ENCODE measurements at regions of chr1 and their contacts with region 1.

Region 1: DNA sequence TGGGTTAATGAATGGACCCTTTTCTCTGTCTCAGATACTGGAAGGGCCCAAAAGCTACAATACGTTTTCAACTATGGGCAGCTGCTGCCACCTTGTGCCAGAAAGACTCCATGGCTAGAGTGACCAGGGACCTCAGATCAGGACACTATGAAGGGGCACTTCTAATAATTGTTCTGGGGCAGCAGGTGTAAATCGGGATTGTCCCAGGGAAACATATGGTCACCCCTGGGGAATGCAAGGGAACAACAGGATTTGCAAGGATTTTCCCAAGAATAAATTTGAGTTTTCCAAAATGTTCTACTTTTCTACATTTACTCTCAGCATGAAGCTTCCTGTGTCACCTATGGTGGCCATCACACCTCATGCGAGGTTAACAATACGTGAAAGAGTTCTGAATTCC is 12.0 kb upstream of the FCAMR start:
- DNase-seq: peak in 1 of 2 experiments; percentile 65
- H3K4me3 ChIP-seq: no peak overlapping the region
- H3K27ac ChIP-seq: no peak overlapping the region
- H3K4me1 ChIP-seq: peaks cover 4 to 15% (median 8%) of the 10 kb centered on the region in 4 experiments
- H3K27me3 ChIP-seq: no peaks in the 10 kb centered on the region; a peak in 1 of 7 replicates
- CTCF ChIP-seq: peak; percentile 49 to 86 (median 76)
- EP300 ChIP-seq: no peak
- POLR2A ChIP-seq: no peak
- RAD21 ChIP-seq: peak; percentile 88 to 92

Region 2: GRCh38 chr1:206808615-206809014 is 173.6 kb before region 1 on chr1:
- CTCF ChIA-PET with region 1: interaction called, 30 read pairs
- POLR2A ChIA-PET with region 1: no interaction called
- DNase-seq: no peak
- H3K4me3 ChIP-seq: no peak overlapping the region
- H3K27ac ChIP-seq: no peak overlapping the region
- H3K4me1 ChIP-seq: no peaks in the 10 kb centered on the region
- H3K27me3 ChIP-seq: no peaks in the 10 kb centered on the region
- CTCF ChIP-seq: peak; percentile 6 to 53 (median 44)
- EP300 ChIP-seq: no peak
- POLR2A ChIP-seq: no peak
- RAD21 ChIP-seq: peak; percentile 62 to 73

Region 3: DNA sequence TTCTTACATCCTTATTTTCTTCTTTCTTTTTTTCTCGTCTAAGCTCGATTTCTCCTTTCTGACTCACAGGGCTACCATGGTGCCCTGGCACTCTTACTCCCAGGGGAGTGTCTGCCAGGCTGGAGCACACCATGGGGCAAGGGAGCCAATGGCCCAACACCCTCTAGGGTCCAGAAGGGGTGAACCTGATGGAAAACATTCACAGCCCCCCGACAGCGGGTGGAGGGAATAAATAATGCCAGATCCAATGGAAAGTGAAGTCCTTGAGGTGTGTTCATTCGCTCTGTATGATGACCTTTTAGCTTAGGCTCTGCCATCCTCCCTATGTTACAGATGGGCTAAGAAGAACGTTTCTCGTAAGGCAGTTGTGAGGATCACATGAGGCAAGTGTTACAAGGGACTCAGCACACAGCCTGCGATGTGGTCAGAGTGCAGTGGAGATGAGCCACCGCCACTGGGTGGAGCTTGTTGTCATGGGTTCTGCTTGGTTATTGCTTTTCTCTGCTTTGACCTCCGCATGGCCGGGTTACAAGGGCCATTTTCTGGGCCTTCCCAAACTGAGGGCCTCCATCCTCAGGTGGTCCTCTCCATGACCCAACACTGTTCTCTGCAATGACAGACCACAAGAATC is 57.0 kb before region 1 on chr1:
- CTCF ChIA-PET with region 1: interaction called, 14 read pairs
- POLR2A ChIA-PET with region 1: interaction called, 3 read pairs
- DNase-seq: no peak
- H3K4me3 ChIP-seq: no peak overlapping the region
- H3K27ac ChIP-seq: no peak overlapping the region
- H3K4me1 ChIP-seq: no peaks in the 10 kb centered on the region
- H3K27me3 ChIP-seq: peaks cover 0 to 2% (median 0%) of the 10 kb centered on the region in 4 experiments; a peak in 1 of 7 replicates
- CTCF ChIP-seq: peak; percentile 24 to 39 (median 37); a peak in 2 of 4 replicates
- EP300 ChIP-seq: no peak
- POLR2A ChIP-seq: no peak
- RAD21 ChIP-seq: peak in 1 of 2 experiments; percentile 35; a peak in 1 of 4 replicates

Region 4: DNA sequence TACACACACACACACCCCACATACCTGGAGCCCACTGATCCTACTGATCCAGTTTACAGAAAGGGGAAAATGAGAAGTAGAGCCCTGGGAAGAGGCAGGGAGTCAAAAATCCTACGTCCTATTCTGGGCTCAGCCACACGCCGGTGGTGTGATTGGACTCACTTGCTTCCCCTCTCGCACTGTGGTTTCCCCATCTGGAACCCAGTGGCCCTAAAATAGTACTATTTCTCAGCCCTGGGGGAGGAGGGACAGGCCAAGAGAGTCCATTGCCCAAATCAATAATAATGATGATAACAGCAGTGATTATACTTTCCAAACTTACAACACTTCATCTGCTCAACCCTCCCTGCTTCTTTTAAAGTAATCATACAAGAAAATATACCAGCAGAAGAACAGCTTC is 33.0 kb before region 1 on chr1:
- CTCF ChIA-PET with region 1: interaction called, 188 read pairs
- POLR2A ChIA-PET with region 1: no interaction called
- DNase-seq: no peak
- H3K4me3 ChIP-seq: no peak overlapping the region
- H3K27ac ChIP-seq: no peak overlapping the region
- H3K4me1 ChIP-seq: no peaks in the 10 kb centered on the region; a peak in 1 of 7 replicates
- H3K27me3 ChIP-seq: no peaks in the 10 kb centered on the region
- CTCF ChIP-seq: no peak
- EP300 ChIP-seq: no peak
- POLR2A ChIP-seq: no peak
- RAD21 ChIP-seq: no peak

Region 5: GRCh38 chr1:206962272-206962671 is 19.9 kb before region 1 on chr1:
- CTCF ChIA-PET with region 1: interaction called, 17 read pairs
- POLR2A ChIA-PET with region 1: no interaction called
- DNase-seq: no peak
- H3K4me3 ChIP-seq: no peak overlapping the region
- H3K27ac ChIP-seq: no peak overlapping the region
- H3K4me1 ChIP-seq: no peaks in the 10 kb centered on the region
- H3K27me3 ChIP-seq: no peaks in the 10 kb centered on the region
- CTCF ChIP-seq: no peak
- EP300 ChIP-seq: no peak
- POLR2A ChIP-seq: no peak
- RAD21 ChIP-seq: no peak

Region 6: GRCh38 chr1:207004981-207005830 is 23.0 kb after region 1 on chr1:
- CTCF ChIA-PET with region 1: interaction called, 39 read pairs
- POLR2A ChIA-PET with region 1: interaction called, 3 read pairs
- DNase-seq: peak in 1 of 2 experiments; percentile 69
- H3K4me3 ChIP-seq: no peak overlapping the region
- H3K27ac ChIP-seq: no peak overlapping the region
- H3K4me1 ChIP-seq: 0 out of 7 replicates have a peak, but pooled peaks cover 0 to 2% (median 0%) of the 10 kb centered on the region in 4 experiments
- H3K27me3 ChIP-seq: no peaks in the 10 kb centered on the region; a peak in 1 of 7 replicates
- CTCF ChIP-seq: peak; percentile 71 to 95 (median 83)
- EP300 ChIP-seq: no peak
- POLR2A ChIP-seq: no peak
- RAD21 ChIP-seq: peak; percentile 50 to 63